Dorsolateral prefrontal cortex (tissue), 120 donors: ENCODE measurements at regions of chr15 and their contacts with region 1.

Region 1: DNA sequence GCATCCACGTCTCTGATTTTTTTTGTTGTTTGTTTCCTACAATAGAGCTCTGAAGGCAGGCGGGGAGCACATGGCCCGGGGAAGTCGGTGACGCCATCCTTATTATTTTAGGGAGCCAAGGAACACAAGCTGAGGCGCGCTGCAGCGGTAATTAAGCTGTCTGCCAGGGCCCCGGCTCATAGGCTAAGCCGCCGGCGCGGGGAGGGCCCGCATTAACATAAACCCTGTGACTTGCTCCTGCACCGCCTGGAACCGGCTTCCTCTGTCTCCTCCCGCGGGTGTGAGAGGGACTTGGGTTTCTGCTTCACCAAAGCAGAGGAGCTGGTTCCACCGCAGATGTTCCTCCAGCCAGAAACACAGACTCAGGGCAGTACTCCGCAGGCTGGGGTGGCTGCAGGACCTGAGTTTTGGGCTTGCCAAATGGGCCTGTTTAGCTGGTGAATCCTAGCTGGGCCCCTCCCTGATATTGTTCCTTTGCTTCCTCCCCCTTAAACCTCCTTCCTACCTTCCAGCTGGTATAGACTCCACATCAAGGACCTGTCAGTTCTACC is 25.3 kb downstream of the ANP32A start:
- DNase-seq: peak; percentile 85 to 96 (median 95)
- H3K4me3 ChIP-seq: peak overlapping the region in 54 of 59 donors; percentile 1 to 59 (median 34)
- H3K27ac ChIP-seq: peak overlapping the region; percentile 63 to 99 (median 96)
- H3K27me3 ChIP-seq: no peaks in the 10 kb centered on the region
- CTCF ChIP-seq: peak in 15 of 56 donors; percentile 3 to 43 (median 15)

Region 2: GRCh38 chr15:68479406-68479805 is 316.0 kb before region 1 on chr15:
- intact Hi-C with region 1: no loop called
- DNase-seq: peak in 6 of 10 donors; percentile 6 to 74 (median 61)
- H3K4me3 ChIP-seq: no peak overlapping the region
- H3K27ac ChIP-seq: peak overlapping the region in 32 of 59 donors; percentile 3 to 75 (median 38)
- H3K27me3 ChIP-seq: no peaks in the 10 kb centered on the region
- CTCF ChIP-seq: no peak

Region 3: GRCh38 chr15:68775671-68776476 is 19.5 kb before region 1 on chr15:
- intact Hi-C with region 1: loop called in 1 of 2 experiments (anchors 2 kb)
- DNase-seq: peak in 9 of 10 donors; percentile 50 to 82 (median 74)
- H3K4me3 ChIP-seq: peak overlapping the region in 2 of 59 donors; percentile 10 to 16
- H3K27ac ChIP-seq: peak overlapping the region; percentile 35 to 95 (median 89)
- H3K27me3 ChIP-seq: no peaks in the 10 kb centered on the region
- CTCF ChIP-seq: no peak

Region 4: DNA sequence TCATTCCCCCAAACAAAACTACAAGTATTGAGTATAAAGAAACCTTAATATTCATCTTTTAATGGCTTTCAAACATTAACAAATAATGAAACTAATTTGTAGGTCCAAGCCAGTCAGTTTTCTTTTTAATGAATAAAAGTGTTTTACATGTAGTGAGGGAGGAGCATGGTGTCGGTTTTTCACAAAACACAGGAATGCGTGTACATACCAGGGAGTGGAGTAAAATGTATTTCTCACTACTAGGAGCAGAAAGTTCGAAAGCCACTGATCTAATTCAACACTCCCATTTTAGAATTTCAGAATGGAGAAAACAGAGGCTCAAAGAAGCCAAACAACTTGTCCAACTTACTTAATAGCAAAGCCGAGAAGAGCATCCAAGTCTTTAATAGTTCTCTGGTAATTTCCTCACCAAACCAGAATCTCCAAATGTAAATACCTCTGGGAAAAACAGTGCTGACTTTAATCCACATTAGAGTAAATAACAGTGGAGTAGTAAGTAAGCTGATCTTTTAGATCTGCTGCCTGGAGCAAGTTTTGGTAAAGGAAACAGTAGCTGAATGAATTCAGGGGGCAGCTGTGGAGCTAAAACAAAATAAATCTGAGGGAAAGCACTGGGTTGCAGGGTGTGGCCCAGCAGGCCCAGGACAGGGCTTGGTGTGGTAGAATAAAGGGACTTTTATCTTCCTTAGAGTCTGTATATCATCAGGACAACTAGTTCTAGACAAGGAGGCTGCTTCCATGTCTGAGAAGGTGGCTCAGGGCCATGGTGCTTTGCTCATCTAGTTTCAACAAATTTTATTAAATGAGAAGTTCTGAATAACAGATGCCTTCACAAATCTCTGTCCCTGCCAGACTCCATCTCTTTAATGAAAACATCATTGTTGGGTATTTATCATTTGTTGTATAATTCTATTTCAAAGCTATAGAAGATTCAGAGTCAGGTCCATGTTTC is 17.5 kb after region 1 on chr15:
- intact Hi-C with region 1: loop called (anchors 1 to 2 kb)
- DNase-seq: no peak
- H3K4me3 ChIP-seq: no peak overlapping the region
- H3K27ac ChIP-seq: peak overlapping the region in 51 of 59 donors; percentile 0 to 98 (median 48)
- H3K27me3 ChIP-seq: no peaks in the 10 kb centered on the region
- CTCF ChIP-seq: no peak